ENCODE measurements at regions of chr15 and their contacts with region 1.

Region 1: GRCh38 chr15:65824031-65824743 is 32.1 kb upstream of the DENND4A start:
- DNase-seq: peak; percentile 58
- ATAC-seq: peak; percentile 98
- H3K4me3 ChIP-seq: no peak overlapping the region
- H3K27ac ChIP-seq: no peak overlapping the region
- H3K4me1 ChIP-seq: peaks cover 0 to 7% of the 10 kb centered on the region in 2 experiments; a peak in 3 of 4 replicates
- H3K27me3 ChIP-seq: no peaks in the 10 kb centered on the region
- CTCF ChIP-seq: peak; percentile 42 to 76 (median 74); a peak in 5 of 6 replicates
- POLR2A ChIP-seq: no peak
- RAD21 ChIP-seq: peak; percentile 57

Region 2: GRCh38 chr15:65638681-65639089 is 185.5 kb before region 1 on chr15:
- CTCF ChIA-PET with region 1: interaction called, 9 read pairs
- POLR2A ChIA-PET with region 1: no interaction called
- RAD21 ChIA-PET with region 1: interaction called in 1 of 2 experiments, 3 read pairs
- intact Hi-C with region 1: loop called (anchors 2 kb)
- DNase-seq: peak; percentile 65
- ATAC-seq: peak; percentile 93
- H3K4me3 ChIP-seq: no peak overlapping the region
- H3K27ac ChIP-seq: no peak overlapping the region
- H3K4me1 ChIP-seq: peaks cover 2 to 9% of the 10 kb centered on the region in 2 experiments; a peak in 3 of 4 replicates
- H3K27me3 ChIP-seq: no peaks in the 10 kb centered on the region
- CTCF ChIP-seq: peak; percentile 84 to 89 (median 89); a peak in 5 of 6 replicates
- POLR2A ChIP-seq: no peak
- RAD21 ChIP-seq: peak; percentile 89

Region 3: GRCh38 chr15:65856821-65857455 is 32.8 kb after region 1 on chr15:
- CTCF ChIA-PET with region 1: interaction called, 14 read pairs
- POLR2A ChIA-PET with region 1: no interaction called
- RAD21 ChIA-PET with region 1: interaction called in 1 of 2 experiments, 3 read pairs
- intact Hi-C with region 1: no loop called
- DNase-seq: peak; percentile 59
- ATAC-seq: peak; percentile 92
- H3K4me3 ChIP-seq: no peak overlapping the region
- H3K27ac ChIP-seq: no peak overlapping the region
- H3K4me1 ChIP-seq: no peaks in the 10 kb centered on the region
- H3K27me3 ChIP-seq: no peaks in the 10 kb centered on the region
- CTCF ChIP-seq: peak; percentile 60 to 94 (median 92)
- POLR2A ChIP-seq: no peak
- RAD21 ChIP-seq: peak; percentile 40